GM10248 (cell line): ENCODE measurements at regions of chr6 and their contacts with region 1.

Region 1: GRCh38 chr6:163956571-163957407 is 542.3 kb downstream of the QKI start:
- DNase-seq: peak; percentile 81
- CTCF ChIP-seq: peak; percentile 83

Region 2: GRCh38 chr6:163427498-163428254 is 529.1 kb before region 1 on chr6:
- CTCF ChIA-PET with region 1: interaction called, 12 read pairs
- POLR2A ChIA-PET with region 1: no interaction called
- DNase-seq: no peak
- CTCF ChIP-seq: peak; percentile 20

Region 3: GRCh38 chr6:163945808-163946207 is 11.0 kb before region 1 on chr6:
- CTCF ChIA-PET with region 1: interaction called, 21 read pairs
- POLR2A ChIA-PET with region 1: no interaction called
- DNase-seq: no peak
- CTCF ChIP-seq: no peak

Region 4: DNA sequence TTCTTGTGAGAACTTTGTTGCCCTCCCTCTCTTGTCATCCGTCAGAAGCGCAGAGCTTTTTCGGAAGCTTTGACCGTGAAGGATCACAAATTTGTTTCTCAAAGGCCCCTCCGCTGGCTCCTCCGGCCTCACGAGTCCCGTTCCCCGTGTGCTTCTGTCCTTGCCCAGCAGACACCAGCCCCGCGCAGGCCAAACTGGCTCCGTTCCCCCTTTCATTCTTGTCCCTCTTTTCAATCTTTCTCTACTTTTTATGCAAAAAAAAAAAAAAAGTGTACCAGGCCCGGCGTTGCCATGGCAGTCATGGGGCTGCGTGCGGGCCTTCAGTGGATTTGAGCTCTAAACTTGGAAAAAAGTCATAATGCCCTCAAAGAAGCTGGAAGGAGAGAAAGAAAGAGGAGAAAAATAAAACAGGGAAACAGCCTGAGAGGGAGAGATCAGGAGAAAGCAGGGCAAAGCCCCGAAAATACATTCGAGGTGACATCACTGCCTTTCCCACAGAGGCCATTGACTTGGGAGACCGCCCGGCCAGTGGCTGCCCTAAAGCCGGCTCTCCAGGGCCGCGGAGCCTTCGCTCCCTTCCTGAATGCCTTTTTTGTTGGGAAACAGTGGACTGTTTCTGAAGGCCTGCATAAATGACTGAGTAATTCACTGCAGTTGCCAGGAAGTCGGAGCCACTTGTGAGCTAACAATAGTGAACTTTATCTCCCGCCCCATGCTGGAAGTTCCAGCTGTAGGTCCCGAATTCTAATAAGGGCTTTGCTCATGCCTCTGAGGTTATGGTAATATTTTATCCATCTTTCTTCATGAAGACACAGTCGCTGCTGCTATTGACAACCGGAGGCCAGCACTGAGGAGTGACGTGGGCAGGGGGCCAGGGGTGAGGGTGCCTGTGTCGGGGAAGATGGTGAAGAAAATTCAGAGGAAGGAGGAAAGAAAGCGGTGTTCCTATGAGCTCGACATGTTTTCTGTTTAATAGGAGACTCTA is 128.6 kb after region 1 on chr6:
- CTCF ChIA-PET with region 1: no interaction called
- POLR2A ChIA-PET with region 1: no interaction called
- DNase-seq: no peak
- CTCF ChIP-seq: no peak